ENCODE measurements at regions of chr2 and their contacts with region 1.

Region 1: DNA sequence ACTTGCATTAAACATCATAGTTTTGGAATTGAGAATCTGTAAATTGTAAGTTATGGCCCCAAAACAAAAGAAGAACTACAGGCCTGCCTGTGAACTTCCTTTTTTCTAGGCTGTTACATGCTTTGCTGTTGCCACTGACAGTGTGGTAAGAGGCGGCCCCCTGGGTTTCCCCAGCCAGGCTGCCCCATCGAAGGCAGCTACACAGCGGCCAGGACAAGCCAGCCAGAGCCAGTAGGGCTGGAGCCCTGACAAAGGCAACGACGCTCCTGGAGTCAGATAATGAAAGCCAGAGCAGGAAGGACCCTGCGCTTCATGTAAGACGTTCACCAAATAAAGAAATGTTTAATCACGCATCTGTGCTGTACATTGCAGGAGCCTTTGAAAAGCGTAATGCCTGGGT is 55.0 kb downstream of the ANKRD44 start:
- DNase-seq: peak; percentile 36 to 93 (median 56)
- ATAC-seq: peak; percentile 82
- H3K4me3 ChIP-seq: peak overlapping the region; percentile 13
- H3K4me3 Mint-ChIP-seq: peak overlapping the region; percentile 75
- H3K27ac ChIP-seq: peak overlapping the region; percentile 76 to 85
- H3K27ac Mint-ChIP-seq: peak overlapping the region; percentile 94
- H3K4me1 ChIP-seq: peaks cover 50% of the 10 kb centered on the region
- H3K4me1 Mint-ChIP-seq: peaks cover 89% of the 10 kb centered on the region
- H3K27me3 ChIP-seq: no peaks in the 10 kb centered on the region
- H3K27me3 Mint-ChIP-seq: no peaks in the 10 kb centered on the region
- CTCF ChIP-seq: no peak

Region 2: DNA sequence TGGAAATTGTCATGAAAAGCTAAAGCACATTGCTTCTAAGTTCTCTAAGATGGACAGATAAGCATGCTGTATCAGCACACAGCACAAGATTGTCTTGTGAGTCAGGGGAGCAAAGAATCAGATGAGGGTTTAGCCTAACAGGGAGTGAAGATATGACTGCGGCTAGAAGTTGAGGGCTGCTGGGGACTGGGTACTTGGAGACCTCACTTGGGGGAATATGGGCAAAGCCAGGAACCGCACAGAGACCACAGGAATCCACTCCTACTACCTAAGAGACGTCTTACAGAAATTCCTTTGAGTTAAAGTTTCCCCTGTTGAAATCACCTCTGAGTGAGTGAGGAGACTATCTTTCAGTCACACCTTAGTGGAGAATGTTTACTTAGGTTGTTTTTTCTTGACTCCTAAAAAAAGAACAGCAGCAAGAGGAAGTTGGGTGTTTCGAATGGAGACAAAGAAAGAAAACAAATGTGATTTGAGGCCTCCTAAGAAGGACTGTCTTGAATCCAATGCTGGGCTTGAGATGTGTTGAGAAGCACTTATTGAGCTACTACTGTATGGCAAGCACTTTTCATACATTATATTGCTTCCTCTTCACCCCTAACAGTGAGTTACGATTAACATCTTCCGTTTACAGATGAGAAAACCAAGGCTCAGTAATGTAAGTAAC is 45.7 kb before region 1 on chr2:
- CTCF ChIA-PET with region 1: interaction called, 4 read pairs
- POLR2A ChIA-PET with region 1: interaction called, 22 read pairs
- intact Hi-C with region 1: no loop called
- DNase-seq: peak in 7 of 14 experiments; percentile 25 to 79 (median 45)
- ATAC-seq: peak; percentile 8
- H3K4me3 ChIP-seq: peak overlapping the region; percentile 15
- H3K4me3 Mint-ChIP-seq: peak overlapping the region; percentile 73
- H3K27ac ChIP-seq: peak overlapping the region; percentile 79 to 86
- H3K27ac Mint-ChIP-seq: peak overlapping the region; percentile 98
- H3K4me1 ChIP-seq: peaks cover 86% of the 10 kb centered on the region
- H3K4me1 Mint-ChIP-seq: peaks cover 98% of the 10 kb centered on the region
- H3K27me3 ChIP-seq: no peaks in the 10 kb centered on the region
- H3K27me3 Mint-ChIP-seq: no peaks in the 10 kb centered on the region
- CTCF ChIP-seq: no peak

Region 3: DNA sequence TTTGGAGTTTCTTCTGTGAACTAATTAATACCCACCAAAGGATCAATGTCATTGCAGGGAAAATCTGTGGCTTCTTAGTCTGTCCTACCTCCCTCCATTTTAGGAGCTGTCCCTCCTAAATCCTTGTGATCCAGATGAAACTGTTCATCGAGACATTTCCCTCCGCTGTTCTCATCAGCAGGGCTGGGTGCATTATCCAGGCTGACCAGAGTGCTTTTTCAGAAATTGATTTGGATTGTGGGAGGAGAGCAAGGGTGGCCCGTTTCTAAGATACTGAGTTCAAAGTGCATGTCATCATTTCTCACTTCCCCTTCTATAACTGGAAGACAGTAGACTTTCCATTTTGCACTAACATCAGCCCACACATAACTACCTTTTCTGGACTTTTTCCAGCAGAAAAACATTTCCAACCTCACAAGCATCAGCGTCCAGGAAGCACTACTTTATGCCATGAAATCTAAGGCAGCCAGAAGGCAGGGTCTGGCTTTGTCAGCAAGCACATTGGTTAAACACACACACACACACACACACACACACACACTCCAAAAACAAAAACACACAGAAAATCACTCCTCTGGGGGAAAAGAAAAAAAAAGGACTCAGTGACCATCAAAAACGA is 39.1 kb before region 1 on chr2:
- CTCF ChIA-PET with region 1: interaction called, 3 read pairs
- POLR2A ChIA-PET with region 1: interaction called, 6 read pairs
- intact Hi-C with region 1: loop called in 1 of 2 experiments (anchors 2 kb)
- DNase-seq: peak in 1 of 14 experiments; percentile 38
- ATAC-seq: peak; percentile 14
- H3K4me3 ChIP-seq: no peak overlapping the region
- H3K4me3 Mint-ChIP-seq: peak overlapping the region; percentile 63
- H3K27ac ChIP-seq: peak overlapping the region; percentile 33 to 62
- H3K27ac Mint-ChIP-seq: peak overlapping the region; percentile 98
- H3K4me1 ChIP-seq: peaks cover 57% of the 10 kb centered on the region
- H3K4me1 Mint-ChIP-seq: peaks cover 89% of the 10 kb centered on the region
- H3K27me3 ChIP-seq: no peaks in the 10 kb centered on the region
- H3K27me3 Mint-ChIP-seq: no peaks in the 10 kb centered on the region
- CTCF ChIP-seq: no peak

Region 4: GRCh38 chr2:197293252-197294007 is 37.9 kb after region 1 on chr2:
- CTCF ChIA-PET with region 1: interaction called, 6 read pairs
- POLR2A ChIA-PET with region 1: interaction called, 10 read pairs
- intact Hi-C with region 1: loop called in 1 of 2 experiments (anchors 5 kb)
- DNase-seq: peak in 5 of 14 experiments; percentile 16 to 75 (median 55)
- ATAC-seq: peak; percentile 74
- H3K4me3 ChIP-seq: peak overlapping the region; percentile 28
- H3K4me3 Mint-ChIP-seq: peak overlapping the region; percentile 64
- H3K27ac ChIP-seq: peak overlapping the region; percentile 70 to 78
- H3K27ac Mint-ChIP-seq: peak overlapping the region; percentile 95
- H3K4me1 ChIP-seq: peaks cover 59% of the 10 kb centered on the region
- H3K4me1 Mint-ChIP-seq: peaks cover 92% of the 10 kb centered on the region
- H3K27me3 ChIP-seq: no peaks in the 10 kb centered on the region
- H3K27me3 Mint-ChIP-seq: no peaks in the 10 kb centered on the region
- CTCF ChIP-seq: no peak